Endothelial cell of umbilical vein (primary cell): ENCODE measurements at regions of chr6 and their contacts with region 1.

Region 1: DNA sequence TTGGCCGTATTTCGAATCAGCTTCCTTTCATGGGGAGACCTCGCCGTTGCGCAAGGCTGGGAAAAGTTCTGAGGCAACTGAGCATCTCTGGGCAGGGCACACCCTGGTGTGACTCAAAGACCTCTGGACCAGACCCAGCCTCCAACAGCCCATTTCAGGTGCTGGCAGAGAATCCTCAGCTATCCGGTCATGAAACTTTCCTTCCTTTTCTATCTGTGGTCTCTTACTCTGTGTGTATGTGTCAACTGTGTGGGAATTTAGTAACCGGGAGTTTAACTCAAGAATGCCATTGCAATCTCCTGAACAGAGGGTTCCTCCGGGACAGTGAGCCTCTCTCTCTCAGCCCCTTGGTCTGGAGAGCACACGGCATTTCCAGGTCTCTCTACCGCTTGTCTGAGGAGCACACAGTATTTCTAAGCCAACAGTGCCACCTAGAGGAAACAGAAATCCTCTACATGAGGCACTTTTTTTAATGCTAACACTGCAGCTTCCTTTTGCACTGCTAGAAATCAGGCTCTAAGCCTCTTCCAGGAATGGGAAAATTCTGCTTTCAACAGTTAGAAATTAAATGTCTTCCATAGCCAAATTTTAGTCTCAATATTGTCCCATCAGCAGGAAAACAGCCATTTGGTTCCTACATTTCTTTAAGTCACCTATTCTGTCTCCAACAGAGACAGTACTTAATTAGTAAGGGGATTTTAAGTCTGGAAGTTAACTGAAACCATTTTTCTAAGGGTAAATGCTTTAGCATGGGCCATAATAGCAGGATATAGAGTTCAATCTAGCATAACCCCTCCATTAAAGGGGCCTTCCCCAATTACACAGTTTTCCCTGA is 32.7 kb downstream of the PLN start:
- DNase-seq: peak; percentile 68
- H3K4me3 ChIP-seq: no peak overlapping the region
- H3K27ac ChIP-seq: no peak overlapping the region
- H3K4me1 ChIP-seq: no peaks in the 10 kb centered on the region
- H3K27me3 ChIP-seq: no peaks in the 10 kb centered on the region
- CTCF ChIP-seq: peak; percentile 54 to 56
- POLR2A ChIP-seq: no peak

Region 2: GRCh38 chr6:118551063-118552053 is 29.4 kb before region 1 on chr6:
- CTCF ChIA-PET with region 1: interaction called, 6 read pairs
- POLR2A ChIA-PET with region 1: no interaction called
- dilution Hi-C with region 1: no loop called
- intact Hi-C with region 1: loop called (anchors 1 kb)
- DNase-seq: peak; percentile 79
- H3K4me3 ChIP-seq: no peak overlapping the region
- H3K27ac ChIP-seq: no peak overlapping the region
- H3K4me1 ChIP-seq: no peaks in the 10 kb centered on the region
- H3K27me3 ChIP-seq: no peaks in the 10 kb centered on the region
- CTCF ChIP-seq: peak; percentile 31 to 46
- POLR2A ChIP-seq: no peak

Region 3: GRCh38 chr6:118558464-118559217 is 22.2 kb before region 1 on chr6:
- CTCF ChIA-PET with region 1: interaction called, 11 read pairs
- POLR2A ChIA-PET with region 1: no interaction called
- dilution Hi-C with region 1: no loop called
- intact Hi-C with region 1: no loop called
- DNase-seq: peak; percentile 59
- H3K4me3 ChIP-seq: no peak overlapping the region
- H3K27ac ChIP-seq: no peak overlapping the region
- H3K4me1 ChIP-seq: peaks cover 11% of the 10 kb centered on the region
- H3K27me3 ChIP-seq: no peaks in the 10 kb centered on the region
- CTCF ChIP-seq: no peak
- POLR2A ChIP-seq: no peak

Region 4: DNA sequence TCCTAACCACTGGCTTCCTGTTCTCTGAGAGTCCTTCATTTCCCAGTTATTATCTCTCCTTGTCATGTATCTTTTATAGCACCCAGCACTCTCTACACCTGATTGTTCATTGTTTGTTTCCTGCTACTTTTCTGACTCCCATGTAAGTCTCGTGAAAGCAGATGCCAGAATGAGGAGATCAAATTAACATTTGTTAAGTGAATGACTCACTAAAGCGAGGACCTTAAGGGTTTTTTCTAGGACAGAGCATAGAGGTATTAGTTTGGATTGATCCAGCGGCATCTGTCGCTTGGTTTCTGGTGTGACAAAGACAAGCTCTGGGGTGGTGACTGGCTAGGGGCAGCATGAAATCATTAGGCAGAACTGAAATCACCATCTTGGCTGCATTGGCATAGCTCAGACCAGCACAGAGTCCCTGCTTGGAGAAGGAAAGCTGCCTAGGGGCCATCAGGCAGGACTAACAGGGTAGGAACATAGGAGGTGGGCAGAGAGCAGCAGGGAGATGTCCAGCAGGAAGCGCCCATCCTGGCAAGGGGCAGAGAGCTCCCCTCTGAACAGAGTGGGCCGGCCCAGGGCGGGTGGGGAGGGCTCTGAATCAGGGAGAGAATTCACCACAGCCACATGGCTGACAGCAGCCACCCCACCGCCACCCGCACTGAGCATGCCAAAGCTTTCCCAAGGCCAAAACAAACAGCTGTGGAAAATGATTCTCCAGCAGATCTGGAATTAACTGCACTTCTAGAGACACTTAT is 167.7 kb after region 1 on chr6:
- CTCF ChIA-PET with region 1: no interaction called
- POLR2A ChIA-PET with region 1: no interaction called
- dilution Hi-C with region 1: no loop called
- intact Hi-C with region 1: no loop called
- DNase-seq: peak; percentile 14
- H3K4me3 ChIP-seq: no peak overlapping the region
- H3K27ac ChIP-seq: no peak overlapping the region
- H3K4me1 ChIP-seq: no peaks in the 10 kb centered on the region
- H3K27me3 ChIP-seq: peaks cover 0 to 4% of the 10 kb centered on the region in 2 experiments
- CTCF ChIP-seq: no peak
- POLR2A ChIP-seq: no peak

Region 5: DNA sequence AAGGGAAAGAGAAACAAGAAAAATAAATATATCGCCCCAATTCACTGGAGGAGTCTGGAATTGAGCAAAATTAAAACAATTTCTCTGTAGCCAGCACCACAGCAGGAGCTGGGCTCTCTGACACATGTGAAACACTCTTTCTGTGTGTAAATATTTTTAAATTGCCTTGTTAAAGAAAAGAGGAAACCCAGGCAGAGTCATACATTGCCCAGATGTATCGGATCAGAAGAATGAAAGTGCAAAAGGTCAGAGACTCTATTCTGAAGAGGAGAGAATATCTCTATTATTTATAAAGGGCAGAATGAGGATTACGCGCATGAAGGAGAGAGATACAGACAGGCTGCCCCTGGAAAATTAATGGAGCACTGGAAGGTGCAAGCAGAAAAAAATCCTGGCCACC is 895.8 kb after region 1 on chr6:
- CTCF ChIA-PET with region 1: no interaction called
- POLR2A ChIA-PET with region 1: no interaction called
- dilution Hi-C with region 1: no loop called
- intact Hi-C with region 1: no loop called
- DNase-seq: no peak
- H3K4me3 ChIP-seq: no peak overlapping the region
- H3K27ac ChIP-seq: no peak overlapping the region
- H3K4me1 ChIP-seq: no peaks in the 10 kb centered on the region
- H3K27me3 ChIP-seq: no peaks in the 10 kb centered on the region
- CTCF ChIP-seq: no peak
- POLR2A ChIP-seq: no peak